Astrocyte of the cerebellum (primary cell): ENCODE measurements at regions of chr9 and their contacts with region 1.

Region 1: DNA sequence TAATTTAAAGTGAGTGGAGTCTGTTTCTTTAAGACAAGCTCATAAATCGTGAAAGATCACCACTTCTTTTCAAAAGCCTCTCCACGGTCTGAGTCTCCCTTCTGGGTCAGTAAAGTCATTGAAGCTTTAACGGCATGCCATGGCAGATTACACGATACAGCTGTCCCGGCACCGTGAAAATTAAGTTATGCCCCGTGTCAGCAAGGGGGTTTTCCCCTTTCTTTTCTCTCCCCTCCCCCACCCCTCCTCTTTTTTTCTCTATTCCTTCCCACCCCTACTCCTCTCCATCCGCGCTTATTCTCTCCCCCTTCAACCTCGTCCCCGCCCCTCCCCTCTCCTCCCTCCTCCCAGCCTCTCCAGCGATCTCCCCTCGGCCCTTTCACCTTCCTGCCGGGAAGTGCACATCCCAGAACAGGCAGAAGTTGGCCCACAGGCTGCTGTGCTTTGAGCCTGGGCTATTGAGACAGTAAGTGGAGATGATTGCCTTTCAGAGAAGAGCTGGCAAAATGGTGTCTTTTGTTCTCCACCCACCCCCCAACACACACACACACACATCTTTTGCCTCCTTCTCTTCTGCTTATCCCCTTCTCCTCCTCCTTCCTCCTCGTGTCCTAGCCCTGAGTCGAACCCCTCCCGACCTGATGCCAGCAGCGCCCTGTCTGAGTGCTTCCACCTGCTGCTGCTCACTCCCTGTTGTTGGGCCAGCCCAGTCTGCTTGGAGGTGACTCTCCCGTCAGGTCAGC is 44.1 kb downstream of the GAS1 start:
- DNase-seq: no peak
- H3K4me3 ChIP-seq: peak overlapping the region; percentile 19
- CTCF ChIP-seq: no peak

Region 2: GRCh38 chr9:86867804-86868313 is 35.3 kb before region 1 on chr9:
- in situ Hi-C with region 1: loop called (anchors 5 kb)
- DNase-seq: peak; percentile 40
- H3K4me3 ChIP-seq: no peak overlapping the region
- CTCF ChIP-seq: no peak

Region 3: GRCh38 chr9:86939321-86939720 is 36.2 kb after region 1 on chr9:
- in situ Hi-C with region 1: loop called (anchors 5 kb)
- DNase-seq: no peak
- H3K4me3 ChIP-seq: no peak overlapping the region
- CTCF ChIP-seq: no peak

Region 4: GRCh38 chr9:87464110-87464965 is 561.2 kb after region 1 on chr9:
- in situ Hi-C with region 1: no loop called
- DNase-seq: no peak
- H3K4me3 ChIP-seq: no peak overlapping the region
- CTCF ChIP-seq: no peak

Region 5: DNA sequence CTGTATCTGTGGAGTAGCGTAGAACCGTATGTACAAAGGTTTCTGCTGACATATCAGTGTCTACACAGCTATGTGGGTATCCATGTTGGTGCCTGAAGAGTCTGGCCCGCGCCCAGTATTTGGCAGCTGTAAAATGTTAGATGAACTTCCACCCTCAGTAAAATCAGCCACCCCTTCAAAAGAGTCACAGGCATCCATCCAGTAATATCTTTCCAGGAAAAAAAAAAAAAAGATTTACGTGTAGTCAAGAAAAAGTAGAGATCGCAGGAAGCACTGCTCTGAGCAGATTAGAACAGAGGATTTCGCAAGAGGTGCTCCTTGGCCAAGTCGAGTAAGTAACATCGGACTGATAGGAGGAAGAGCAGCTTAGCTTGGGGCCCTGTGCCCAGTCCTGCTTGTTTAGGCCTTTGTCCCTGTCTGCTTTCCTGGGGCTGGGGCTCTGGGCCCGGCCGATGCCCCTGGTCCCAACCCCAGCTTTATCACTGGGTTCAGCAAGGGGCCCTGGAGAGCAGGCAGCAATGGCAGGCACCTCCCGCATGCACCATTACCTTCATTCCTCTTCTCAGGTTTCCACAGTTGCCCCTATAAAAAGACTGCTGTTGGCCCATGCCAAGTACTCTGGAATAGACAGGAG is 615.7 kb after region 1 on chr9:
- in situ Hi-C with region 1: no loop called
- DNase-seq: no peak
- H3K4me3 ChIP-seq: no peak overlapping the region
- CTCF ChIP-seq: no peak